Dendritic cell treated with granulocyte-macrophage colony-stimulating factor and Interleukin-4, amounts not matched to agents 40 ng/mL and 50 ng/mL, for 4 days (primary cell): ENCODE measurements at regions of chr13 and their contacts with region 1.

Region 1: DNA sequence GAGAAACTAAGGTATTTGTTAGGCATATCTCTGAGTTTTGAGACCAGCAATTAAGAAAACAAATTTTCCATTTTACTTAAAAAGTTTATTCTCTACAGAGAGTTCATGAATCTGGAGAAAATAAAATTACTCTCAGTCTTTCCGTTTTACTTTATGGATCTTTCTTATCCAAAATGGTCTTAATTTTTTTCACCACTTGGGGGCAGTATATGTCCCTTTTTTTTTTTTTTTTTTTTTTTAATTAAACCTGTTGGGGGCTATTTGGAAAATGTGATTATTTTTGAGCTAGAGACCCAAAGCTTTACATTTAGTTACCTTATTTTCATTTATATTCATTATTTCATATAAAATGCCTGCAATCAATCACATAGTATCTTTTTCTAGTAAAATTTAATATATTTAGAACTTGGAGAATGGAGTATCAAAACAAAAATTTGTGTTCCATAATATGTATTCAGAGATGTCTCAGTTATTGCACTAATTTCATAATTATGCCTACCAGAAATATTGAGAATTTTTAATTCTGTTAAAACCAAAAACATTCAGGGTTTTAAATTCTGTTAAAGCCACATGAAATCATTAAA is 27.1 kb downstream of the PIBF1 start:
- H3K4me3 Mint-ChIP-seq: no peak overlapping the region
- H3K27ac Mint-ChIP-seq: no peak overlapping the region
- H3K4me1 Mint-ChIP-seq: peaks cover 6% of the 10 kb centered on the region
- H3K27me3 Mint-ChIP-seq: no peaks in the 10 kb centered on the region

Region 2: DNA sequence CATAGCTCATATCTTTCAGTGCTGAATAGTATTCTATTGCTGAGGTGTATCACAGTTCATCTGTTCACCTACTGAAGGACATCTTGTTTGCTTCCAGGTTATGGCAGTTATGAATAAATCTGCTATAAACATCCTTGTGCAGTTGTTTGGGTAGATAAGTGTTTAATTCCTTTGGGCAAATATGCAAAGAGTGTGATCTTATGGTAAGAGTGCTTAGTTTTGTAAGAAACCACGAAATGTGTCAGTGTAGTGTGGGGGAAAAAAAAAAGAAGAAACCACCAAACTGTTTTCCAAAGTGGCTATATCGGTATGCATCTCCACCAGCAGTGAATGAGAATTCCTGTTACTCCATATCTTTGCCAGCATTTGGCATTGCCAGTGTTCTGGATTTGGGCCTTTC is 66.2 kb after region 1 on chr13:
- intact Hi-C with region 1: no loop called
- H3K4me3 Mint-ChIP-seq: no peak overlapping the region
- H3K27ac Mint-ChIP-seq: no peak overlapping the region
- H3K4me1 Mint-ChIP-seq: no peaks in the 10 kb centered on the region
- H3K27me3 Mint-ChIP-seq: no peaks in the 10 kb centered on the region

Region 3: GRCh38 chr13:73708393-73708985 is 899.5 kb after region 1 on chr13:
- intact Hi-C with region 1: loop called (anchors 2 kb)
- H3K4me3 Mint-ChIP-seq: no peak overlapping the region
- H3K27ac Mint-ChIP-seq: no peak overlapping the region
- H3K4me1 Mint-ChIP-seq: no peaks in the 10 kb centered on the region
- H3K27me3 Mint-ChIP-seq: no peaks in the 10 kb centered on the region